PC-3 (cell line): ENCODE measurements at regions of chr1 and their contacts with region 1.

Region 1: DNA sequence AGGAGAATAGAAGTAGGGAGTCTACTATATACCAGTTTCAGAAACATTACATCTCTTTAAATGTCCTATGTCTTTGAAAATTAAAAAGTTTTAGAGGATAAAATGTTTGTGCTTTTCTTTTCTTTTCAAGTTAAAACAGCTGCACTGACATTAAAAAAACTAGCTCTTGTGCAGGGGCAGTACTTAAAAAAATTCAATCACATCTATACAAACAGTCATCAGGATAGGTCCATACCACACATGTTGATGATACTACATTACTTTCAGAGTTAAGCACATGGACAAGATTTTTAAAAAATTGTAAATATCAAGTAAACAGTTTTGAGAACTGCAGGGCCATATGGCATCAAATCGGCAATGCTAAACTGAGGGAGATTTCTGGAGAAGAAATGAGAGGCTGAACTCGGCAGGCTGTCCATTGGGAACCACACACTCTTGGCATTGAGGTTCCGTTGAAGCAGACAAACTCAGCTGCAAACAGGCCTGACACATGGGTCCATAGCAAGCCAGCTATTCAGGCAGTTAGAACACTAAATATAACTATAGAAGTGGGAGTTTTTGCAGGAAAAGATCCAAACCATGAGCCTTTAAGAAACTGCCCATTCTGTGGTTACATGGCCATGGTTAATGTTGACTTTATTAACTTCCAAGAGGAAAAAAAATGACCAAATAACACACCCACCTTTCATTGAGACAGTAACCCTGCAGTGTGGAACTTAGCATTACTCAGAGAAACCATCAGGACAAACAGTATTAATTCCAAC is 84.5 kb upstream of the BCL10 start:
- DNase-seq: peak; percentile 83
- ATAC-seq: peak; percentile 70
- H3K4me3 ChIP-seq: 0 out of 2 replicates have a peak overlapping the region, but pooled peaks have one; percentile 5
- H3K27ac ChIP-seq: peak overlapping the region; percentile 84
- H3K4me1 ChIP-seq: peaks cover 41% of the 10 kb centered on the region
- H3K27me3 ChIP-seq: no peaks in the 10 kb centered on the region
- CTCF ChIP-seq: no peak

Region 2: GRCh38 chr1:85224734-85225623 is 135.9 kb before region 1 on chr1:
- CTCF ChIA-PET with region 1: no interaction called
- POLR2A ChIA-PET with region 1: no interaction called
- intact Hi-C with region 1: no loop called
- DNase-seq: peak; percentile 72
- ATAC-seq: peak; percentile 38; the same call in 1 of the 2 replicates
- H3K4me3 ChIP-seq: no peak overlapping the region
- H3K27ac ChIP-seq: peak overlapping the region; percentile 4; the same call in 1 of the 2 replicates
- H3K4me1 ChIP-seq: peaks cover 20% of the 10 kb centered on the region
- H3K27me3 ChIP-seq: no peaks in the 10 kb centered on the region
- CTCF ChIP-seq: no peak

Region 3: DNA sequence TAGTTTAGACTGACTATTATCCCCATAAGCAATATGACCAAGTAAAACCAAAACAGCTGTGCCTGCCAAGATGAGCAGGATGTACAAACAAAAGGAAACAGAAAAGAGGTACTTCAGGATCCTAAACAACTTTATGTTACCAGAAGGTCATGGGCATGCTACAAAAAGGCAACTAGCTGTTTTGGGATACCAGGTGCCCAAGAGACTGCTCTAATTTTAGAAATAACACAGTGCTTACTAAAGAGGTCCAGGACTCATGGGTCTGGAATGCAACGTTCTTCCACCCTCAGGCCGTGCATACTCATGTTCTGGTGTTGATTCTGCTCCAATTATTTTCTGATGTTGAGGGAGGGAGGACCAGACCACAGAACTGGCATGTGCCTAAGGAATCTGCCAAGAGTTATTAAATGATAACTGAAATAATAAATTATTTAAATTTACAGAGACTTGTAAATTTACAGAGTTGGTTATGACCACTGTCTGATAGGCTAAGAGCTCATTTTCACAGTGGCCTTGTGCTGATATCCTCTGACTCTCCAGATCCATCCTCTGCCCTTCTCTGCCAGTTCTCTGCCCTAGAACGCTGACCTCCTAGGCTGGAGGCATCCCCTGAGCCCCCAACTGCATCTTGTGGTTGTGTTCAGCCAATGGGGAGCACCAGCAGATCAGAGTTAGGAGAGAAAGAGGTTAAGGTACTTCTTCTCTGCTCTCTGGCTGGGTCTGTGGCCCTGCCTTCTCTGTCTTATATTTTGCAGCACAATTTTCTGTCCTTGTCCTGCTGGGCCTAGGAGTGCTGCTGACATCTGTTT is 46.8 kb before region 1 on chr1:
- CTCF ChIA-PET with region 1: no interaction called
- POLR2A ChIA-PET with region 1: no interaction called
- intact Hi-C with region 1: loop called (anchors 5 kb)
- DNase-seq: peak; percentile 96
- ATAC-seq: peak; percentile 97
- H3K4me3 ChIP-seq: no peak overlapping the region
- H3K27ac ChIP-seq: peak overlapping the region; percentile 56
- H3K4me1 ChIP-seq: peaks cover 43% of the 10 kb centered on the region
- H3K27me3 ChIP-seq: no peaks in the 10 kb centered on the region
- CTCF ChIP-seq: no peak

Region 4: DNA sequence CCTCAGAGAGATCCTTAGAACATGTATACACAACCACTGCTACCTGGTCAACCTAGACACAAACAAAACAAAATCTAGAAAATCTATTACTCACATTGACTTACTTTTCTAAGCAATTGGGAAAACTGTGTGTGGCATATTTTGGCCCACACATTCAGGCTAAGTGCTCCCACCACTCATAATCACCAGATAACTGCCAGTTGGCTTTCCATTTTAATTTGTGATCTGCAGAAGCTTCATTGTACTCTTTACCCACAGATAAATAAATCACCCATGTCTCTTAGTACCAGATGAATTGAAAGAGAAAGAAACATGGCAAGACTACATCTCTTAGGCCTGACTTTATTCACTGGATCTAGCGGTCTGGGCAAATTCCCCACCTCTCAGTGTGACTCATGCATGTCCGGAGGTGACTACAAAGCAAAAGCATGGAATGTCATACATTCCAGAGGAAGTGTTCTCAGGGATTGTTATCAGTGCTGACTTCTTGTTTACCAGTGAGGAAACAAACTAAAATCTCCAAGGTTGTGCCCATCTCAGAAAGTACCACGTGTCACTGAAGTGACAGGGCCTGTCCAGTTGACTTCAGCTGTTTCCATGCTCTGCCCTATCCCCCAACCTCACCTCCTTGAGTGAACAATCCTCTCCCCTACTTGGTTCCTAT is 32.1 kb before region 1 on chr1:
- CTCF ChIA-PET with region 1: no interaction called
- POLR2A ChIA-PET with region 1: no interaction called
- intact Hi-C with region 1: loop called (anchors 1 kb)
- DNase-seq: peak; percentile 99
- ATAC-seq: peak; percentile 90
- H3K4me3 ChIP-seq: no peak overlapping the region
- H3K27ac ChIP-seq: peak overlapping the region; percentile 90
- H3K4me1 ChIP-seq: peaks cover 61% of the 10 kb centered on the region
- H3K27me3 ChIP-seq: no peaks in the 10 kb centered on the region
- CTCF ChIP-seq: no peak

Region 5: GRCh38 chr1:85344256-85344694 is 16.6 kb before region 1 on chr1:
- CTCF ChIA-PET with region 1: interaction called, 3 read pairs
- POLR2A ChIA-PET with region 1: interaction called, 9 read pairs
- intact Hi-C with region 1: loop called (anchors 2 kb)
- DNase-seq: peak; percentile 63
- ATAC-seq: peak; percentile 78
- H3K4me3 ChIP-seq: no peak overlapping the region
- H3K27ac ChIP-seq: peak overlapping the region; percentile 71
- H3K4me1 ChIP-seq: peaks cover 57% of the 10 kb centered on the region
- H3K27me3 ChIP-seq: no peaks in the 10 kb centered on the region
- CTCF ChIP-seq: peak; percentile 85

Region 6: DNA sequence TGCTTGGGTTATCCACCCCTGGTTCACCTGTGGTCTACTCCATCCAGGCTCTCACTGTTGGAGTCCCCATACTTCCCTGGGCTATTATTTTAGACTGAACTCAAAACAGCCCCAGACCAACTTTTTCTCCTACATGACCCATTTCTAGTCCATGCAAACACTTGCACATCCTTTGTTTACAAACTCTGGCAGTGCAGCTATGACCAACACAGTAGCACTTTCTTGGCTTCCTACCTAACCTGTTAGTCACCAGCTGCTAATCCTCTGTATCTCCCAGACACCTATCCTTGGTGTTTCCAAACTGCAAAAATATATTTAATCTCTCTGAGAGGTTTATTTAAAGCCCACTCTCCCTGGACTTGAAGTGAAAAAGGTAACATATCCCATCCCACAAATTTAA is 13.2 kb after region 1 on chr1:
- CTCF ChIA-PET with region 1: no interaction called
- POLR2A ChIA-PET with region 1: interaction called, 3 read pairs
- intact Hi-C with region 1: loop called (anchors 2 kb)
- DNase-seq: peak; percentile 92
- ATAC-seq: peak; percentile 99
- H3K4me3 ChIP-seq: no peak overlapping the region
- H3K27ac ChIP-seq: no peak overlapping the region
- H3K4me1 ChIP-seq: peaks cover 35% of the 10 kb centered on the region
- H3K27me3 ChIP-seq: no peaks in the 10 kb centered on the region
- CTCF ChIP-seq: no peak

Region 7: GRCh38 chr1:85398391-85399064 is 37.6 kb after region 1 on chr1:
- CTCF ChIA-PET with region 1: no interaction called
- POLR2A ChIA-PET with region 1: no interaction called
- intact Hi-C with region 1: loop called (anchors 1 kb)
- DNase-seq: peak; percentile 72
- ATAC-seq: peak; percentile 81
- H3K4me3 ChIP-seq: no peak overlapping the region
- H3K27ac ChIP-seq: no peak overlapping the region
- H3K4me1 ChIP-seq: peaks cover 18% of the 10 kb centered on the region; the same call in 1 of the 2 replicates
- H3K27me3 ChIP-seq: no peaks in the 10 kb centered on the region
- CTCF ChIP-seq: peak; percentile 77

Region 8: DNA sequence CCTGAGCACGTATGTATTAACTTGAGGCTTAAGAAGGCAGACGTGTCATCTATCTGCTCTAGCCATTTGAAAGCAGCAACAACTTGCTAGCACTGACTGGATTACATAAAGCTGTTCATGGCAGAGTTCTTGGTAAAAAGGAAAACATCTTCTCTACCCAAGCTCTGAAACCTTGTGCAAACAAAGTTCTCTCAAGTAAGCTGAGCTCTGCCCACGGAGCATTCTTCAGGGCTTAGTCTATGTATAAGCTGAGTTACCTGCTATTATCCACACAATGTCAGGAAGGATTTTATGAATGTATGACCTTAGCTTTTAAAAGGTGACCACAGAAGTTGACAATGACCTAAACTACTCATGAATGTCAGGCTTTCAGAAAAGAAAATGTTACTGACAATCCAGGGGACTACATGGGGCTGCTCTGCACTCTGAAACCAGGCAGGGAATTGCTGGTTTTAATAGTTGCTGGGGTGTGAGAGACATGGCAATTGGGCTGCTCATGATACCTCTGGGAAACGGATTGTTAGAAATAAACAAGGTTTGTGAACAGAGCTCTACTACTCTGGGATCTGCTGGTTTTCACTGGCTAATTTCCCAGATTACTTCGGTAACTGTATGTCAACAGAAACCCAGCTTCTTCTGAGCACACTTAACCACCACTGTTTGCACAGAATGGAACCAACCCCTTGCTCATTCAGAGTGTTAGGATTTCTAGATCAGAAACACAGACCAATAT is 190.0 kb after region 1 on chr1:
- CTCF ChIA-PET with region 1: no interaction called
- POLR2A ChIA-PET with region 1: no interaction called
- intact Hi-C with region 1: loop called (anchors 1 kb)
- DNase-seq: peak; percentile 97
- ATAC-seq: peak; percentile 93
- H3K4me3 ChIP-seq: peak overlapping the region; percentile 41
- H3K27ac ChIP-seq: peak overlapping the region; percentile 86
- H3K4me1 ChIP-seq: peaks cover 77% of the 10 kb centered on the region
- H3K27me3 ChIP-seq: no peaks in the 10 kb centered on the region
- CTCF ChIP-seq: no peak